Activated T-helper 1 cell treated with anti-CD3 and anti-CD28 coated beads, Interleukin-12 subunit alpha, Interleukin-12 subunit beta, Interleukin-2, Interleukin-4 antibody, amounts not matched to agents 30 ng/mL and 10 ng/mL and 1 ng/mL, durations not matched to agents 14 hours and 24 hours and 36 hours (primary cell): ENCODE measurements at regions of chrX and their contacts with region 1.

Region 1: GRCh38 chrX:121000587-121000986 is 15.0 kb upstream of the CT47A1 start:
- DNase-seq: no peak
- H3K4me3 Mint-ChIP-seq: no peak overlapping the region
- H3K27ac Mint-ChIP-seq: no peak overlapping the region
- H3K4me1 Mint-ChIP-seq: no peaks in the 10 kb centered on the region
- H3K27me3 Mint-ChIP-seq: no peaks in the 10 kb centered on the region

Region 2: DNA sequence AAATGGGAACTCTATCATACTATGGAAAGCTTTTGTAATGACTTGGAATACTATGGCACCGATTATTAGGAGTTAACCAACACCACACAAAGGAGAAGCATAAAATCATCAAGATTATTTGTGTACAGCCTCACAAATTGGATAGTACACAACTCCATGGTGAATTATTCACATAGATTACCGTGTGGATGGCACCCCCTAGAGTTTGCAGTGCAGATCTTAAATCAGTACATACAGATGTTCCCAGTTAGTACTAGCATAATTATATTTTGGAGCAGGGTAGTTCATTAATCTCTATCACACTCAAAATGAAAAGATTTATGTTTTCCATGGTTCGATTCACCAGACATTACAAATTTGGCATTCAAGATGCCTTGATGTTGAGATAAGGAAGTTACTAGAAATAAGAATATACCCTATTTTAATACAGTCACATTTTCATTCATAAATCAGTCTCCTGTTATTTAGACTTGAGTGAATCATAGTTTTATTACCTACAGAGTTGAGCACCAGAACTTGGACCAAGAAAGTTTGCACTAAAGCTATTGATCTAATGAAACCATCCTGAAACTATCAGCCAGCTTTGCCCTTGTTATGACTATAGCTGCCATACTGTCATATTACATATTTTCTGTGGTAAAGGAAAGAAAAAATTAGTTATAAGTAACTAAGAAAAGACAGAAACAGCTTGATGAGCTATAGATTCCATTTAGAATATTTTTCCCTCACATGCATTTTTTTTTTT is 578.6 kb after region 1 on chrX:
- intact Hi-C with region 1: loop called (anchors 1 kb)
- DNase-seq: no peak
- H3K4me3 Mint-ChIP-seq: no peak overlapping the region
- H3K27ac Mint-ChIP-seq: peak overlapping the region; percentile 61
- H3K4me1 Mint-ChIP-seq: no peaks in the 10 kb centered on the region
- H3K27me3 Mint-ChIP-seq: no peaks in the 10 kb centered on the region